Astrocyte of the cerebellum (primary cell): ENCODE measurements at regions of chr16 and their contacts with region 1.

Region 1: GRCh38 chr16:56327071-56327928 is 98.0 kb downstream of the AMFR start:
- DNase-seq: no peak
- H3K4me3 ChIP-seq: no peak overlapping the region
- CTCF ChIP-seq: no peak

Region 2: DNA sequence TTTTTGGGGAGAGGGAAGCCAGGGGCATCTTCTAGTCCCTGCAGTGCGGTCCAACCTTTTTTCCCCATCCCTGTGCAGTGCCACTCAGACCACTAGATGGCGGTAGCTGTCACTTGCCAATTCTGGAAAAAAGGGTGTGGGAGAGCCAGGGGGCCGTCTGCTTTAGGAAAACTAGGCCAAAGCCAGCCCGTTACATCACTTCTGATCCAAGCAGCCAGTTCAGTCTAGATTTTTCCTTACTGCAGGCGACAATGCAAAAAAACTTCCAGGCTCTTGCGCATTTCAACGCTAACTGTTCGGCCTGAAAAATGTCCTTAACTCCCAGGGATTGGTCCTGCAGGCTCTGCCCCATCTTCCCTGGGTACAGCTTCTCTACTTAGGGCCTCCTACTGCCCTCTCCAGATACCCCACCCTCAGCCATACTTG is 382.9 kb before region 1 on chr16:
- in situ Hi-C with region 1: loop called (anchors 5 kb)
- DNase-seq: peak; percentile 28
- H3K4me3 ChIP-seq: no peak overlapping the region
- CTCF ChIP-seq: peak; percentile 98

Region 3: DNA sequence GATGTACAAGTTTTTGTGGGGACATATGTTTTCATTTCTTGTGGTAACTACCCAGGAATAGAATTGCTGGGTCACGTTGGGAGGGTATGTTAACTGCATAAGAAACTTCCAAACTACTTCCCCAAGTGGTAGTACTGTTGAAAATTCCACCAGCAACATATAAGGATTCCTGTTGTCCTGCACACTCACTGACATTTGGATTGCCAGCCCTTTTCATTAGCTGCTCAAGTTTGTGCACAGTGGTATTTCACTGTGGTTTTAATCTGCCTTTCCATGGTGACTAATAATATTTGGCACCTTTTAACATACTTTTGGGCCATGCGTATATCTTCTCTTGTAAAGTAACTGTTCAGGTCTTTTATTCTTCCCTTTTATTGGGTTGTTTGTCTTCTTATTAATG is 32.7 kb before region 1 on chr16:
- in situ Hi-C with region 1: no loop called
- DNase-seq: peak; percentile 74
- H3K4me3 ChIP-seq: no peak overlapping the region
- CTCF ChIP-seq: no peak

Region 4: DNA sequence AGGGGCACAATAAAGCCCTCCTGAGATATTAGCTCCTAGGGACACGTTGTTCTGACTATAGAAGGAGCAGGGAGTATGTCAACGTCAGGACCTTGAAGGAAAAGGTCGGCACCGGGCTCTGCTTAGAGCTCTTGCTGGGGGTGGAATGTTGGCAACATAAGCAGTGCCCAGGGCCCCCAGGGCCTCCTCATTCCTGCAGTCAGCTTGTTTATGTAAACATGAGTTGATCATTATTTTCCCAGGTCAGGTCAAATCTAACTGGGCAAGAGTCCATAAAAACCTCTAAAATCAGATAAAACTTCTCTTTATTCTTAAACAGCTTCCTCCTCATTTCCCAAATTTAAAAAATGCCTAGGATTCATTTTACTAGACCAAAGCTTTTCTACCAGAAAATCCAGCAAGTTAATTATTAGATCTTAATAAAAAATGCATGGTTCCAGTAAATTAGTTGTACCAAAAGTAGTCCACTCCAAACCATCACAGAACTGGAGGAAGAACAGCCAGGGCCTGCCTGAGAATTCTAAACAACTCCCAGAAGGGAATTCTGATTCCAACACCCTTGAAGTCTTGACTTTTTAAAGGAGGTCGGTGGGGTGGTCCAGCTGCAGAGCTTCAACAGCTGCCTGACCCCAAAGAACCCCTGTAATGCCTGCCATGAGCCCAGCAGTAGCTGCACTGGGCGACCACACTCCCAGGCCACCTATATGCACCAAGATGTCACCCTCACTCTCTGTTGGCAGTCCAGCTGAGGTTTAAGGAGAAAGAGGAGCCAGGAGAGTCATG is 43.8 kb after region 1 on chr16:
- in situ Hi-C with region 1: no loop called
- DNase-seq: no peak
- H3K4me3 ChIP-seq: no peak overlapping the region
- CTCF ChIP-seq: no peak